IMR-90 (cell line): ENCODE measurements at regions of chr14 and their contacts with region 1.

Region 1: DNA sequence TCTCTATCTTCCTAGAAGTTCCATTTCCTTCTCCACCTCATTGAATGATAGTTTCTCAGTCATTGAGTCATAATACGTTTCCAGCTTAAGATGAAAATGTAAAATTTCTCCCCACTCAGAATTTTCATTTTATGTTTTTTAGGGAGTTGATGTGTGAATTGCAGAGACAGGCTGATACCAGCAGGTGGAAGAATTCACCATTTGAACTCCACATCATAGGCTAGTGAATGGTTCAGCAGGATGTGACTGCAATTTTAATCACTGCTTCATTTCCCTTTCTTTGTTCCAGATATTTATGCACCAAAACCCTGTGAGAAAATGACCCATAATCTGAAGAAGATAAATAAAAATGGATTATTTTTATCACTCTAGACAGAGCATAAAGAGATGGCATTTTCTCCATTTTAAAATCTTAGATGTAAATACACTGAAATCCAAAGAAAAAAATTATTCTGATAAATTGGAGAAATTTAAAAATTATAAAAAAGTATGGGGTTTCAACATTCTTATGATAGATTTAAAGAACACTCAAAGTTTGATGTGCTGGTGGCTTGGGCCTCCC is 10.6 kb upstream of the PYGL start:
- DNase-seq: peak; percentile 79
- ATAC-seq: peak; percentile 63
- H3K4me3 ChIP-seq: no peak overlapping the region
- H3K27ac ChIP-seq: peak overlapping the region; percentile 81
- H3K4me1 ChIP-seq: peaks cover 4% of the 10 kb centered on the region
- H3K27me3 ChIP-seq: no peaks in the 10 kb centered on the region
- CTCF ChIP-seq: peak; percentile 78
- POLR2A ChIP-seq: no peak
- RAD21 ChIP-seq: peak; percentile 65

Region 2: GRCh38 chr14:50920482-50921230 is 34.2 kb before region 1 on chr14:
- CTCF ChIA-PET with region 1: interaction called, 5 read pairs
- POLR2A ChIA-PET with region 1: interaction called, 20 read pairs
- dilution Hi-C with region 1: no loop called
- in situ Hi-C with region 1: no loop called
- intact Hi-C with region 1: loop called (anchors 2 kb)
- DNase-seq: peak; percentile 90
- ATAC-seq: peak; percentile 97
- H3K4me3 ChIP-seq: no peak overlapping the region
- H3K27ac ChIP-seq: peak overlapping the region; percentile 93
- H3K4me1 ChIP-seq: peaks cover 8% of the 10 kb centered on the region
- H3K27me3 ChIP-seq: no peaks in the 10 kb centered on the region
- CTCF ChIP-seq: no peak
- POLR2A ChIP-seq: no peak
- RAD21 ChIP-seq: no peak

Region 3: GRCh38 chr14:50927987-50928635 is 26.8 kb before region 1 on chr14:
- CTCF ChIA-PET with region 1: no interaction called
- POLR2A ChIA-PET with region 1: interaction called, 20 read pairs
- dilution Hi-C with region 1: no loop called
- in situ Hi-C with region 1: no loop called
- intact Hi-C with region 1: no loop called
- DNase-seq: peak; percentile 85
- ATAC-seq: peak; percentile 85
- H3K4me3 ChIP-seq: no peak overlapping the region
- H3K27ac ChIP-seq: no peak overlapping the region
- H3K4me1 ChIP-seq: peaks cover 3% of the 10 kb centered on the region
- H3K27me3 ChIP-seq: no peaks in the 10 kb centered on the region
- CTCF ChIP-seq: no peak
- POLR2A ChIP-seq: no peak
- RAD21 ChIP-seq: no peak

Region 4: DNA sequence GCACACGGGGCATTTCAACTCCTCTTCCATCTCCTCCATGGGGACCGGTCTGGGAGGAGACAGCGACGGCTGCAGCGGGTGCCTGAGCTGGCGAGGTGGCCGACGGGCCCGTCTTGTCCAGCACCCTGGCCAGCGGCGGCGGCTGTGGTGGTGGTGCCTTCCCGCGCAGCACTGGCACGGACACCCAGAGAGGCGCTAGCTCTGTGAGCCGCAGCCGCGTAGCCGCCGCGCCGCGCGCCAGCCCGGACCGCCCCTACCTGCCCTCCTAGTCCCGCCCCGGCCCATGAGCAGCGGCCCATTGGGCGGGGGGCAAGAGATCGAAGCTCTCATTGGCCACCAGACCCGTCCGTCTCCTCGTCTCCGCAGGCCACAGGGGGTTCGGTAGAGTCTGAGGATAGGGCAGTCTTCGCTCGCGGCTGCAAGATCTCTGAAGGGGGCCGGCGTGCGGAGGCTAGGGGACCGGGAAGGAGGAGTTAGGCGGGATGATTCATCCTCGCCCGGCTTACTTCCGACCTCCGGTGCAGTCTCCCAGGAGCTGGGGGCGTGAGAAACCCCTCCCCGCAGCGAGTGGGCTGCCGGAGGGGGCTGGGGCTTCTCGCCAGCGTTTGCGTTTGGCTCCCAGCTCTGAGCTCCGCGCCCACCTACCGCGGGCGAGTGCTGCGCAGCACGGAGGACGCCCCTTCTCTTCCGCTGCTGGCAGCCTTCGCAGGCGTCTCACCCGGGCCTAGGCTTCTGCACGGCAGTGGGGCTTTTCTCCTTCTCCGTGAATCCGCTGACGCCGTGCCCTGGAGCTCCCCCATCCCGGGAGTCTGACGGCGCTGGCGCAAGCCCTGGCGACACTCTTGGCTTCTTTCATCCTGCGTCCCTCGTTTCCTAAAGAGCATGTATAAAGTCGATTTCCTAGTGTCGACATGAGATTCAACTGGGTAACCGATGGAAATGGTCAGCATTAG is 140.3 kb after region 1 on chr14 and contains the start of gene TRIM9:
- CTCF ChIA-PET with region 1: no interaction called
- POLR2A ChIA-PET with region 1: interaction called, 3 read pairs
- dilution Hi-C with region 1: no loop called
- in situ Hi-C with region 1: no loop called
- intact Hi-C with region 1: loop called (anchors 5 kb)
- DNase-seq: peak; percentile 93
- ATAC-seq: peak; percentile 99
- H3K4me3 ChIP-seq: peak within 1 kb of the TSS; percentile 47
- H3K27ac ChIP-seq: no peak within 1 kb of the TSS
- H3K4me1 ChIP-seq: no peaks in the 10 kb centered on the region
- H3K27me3 ChIP-seq: peaks cover 34% of the 10 kb centered on the region
- CTCF ChIP-seq: no peak
- POLR2A ChIP-seq: no peak
- RAD21 ChIP-seq: no peak
- total RNA-seq, gene TRIM9: under 0.01 TPM in 2 replicates

Region 5: DNA sequence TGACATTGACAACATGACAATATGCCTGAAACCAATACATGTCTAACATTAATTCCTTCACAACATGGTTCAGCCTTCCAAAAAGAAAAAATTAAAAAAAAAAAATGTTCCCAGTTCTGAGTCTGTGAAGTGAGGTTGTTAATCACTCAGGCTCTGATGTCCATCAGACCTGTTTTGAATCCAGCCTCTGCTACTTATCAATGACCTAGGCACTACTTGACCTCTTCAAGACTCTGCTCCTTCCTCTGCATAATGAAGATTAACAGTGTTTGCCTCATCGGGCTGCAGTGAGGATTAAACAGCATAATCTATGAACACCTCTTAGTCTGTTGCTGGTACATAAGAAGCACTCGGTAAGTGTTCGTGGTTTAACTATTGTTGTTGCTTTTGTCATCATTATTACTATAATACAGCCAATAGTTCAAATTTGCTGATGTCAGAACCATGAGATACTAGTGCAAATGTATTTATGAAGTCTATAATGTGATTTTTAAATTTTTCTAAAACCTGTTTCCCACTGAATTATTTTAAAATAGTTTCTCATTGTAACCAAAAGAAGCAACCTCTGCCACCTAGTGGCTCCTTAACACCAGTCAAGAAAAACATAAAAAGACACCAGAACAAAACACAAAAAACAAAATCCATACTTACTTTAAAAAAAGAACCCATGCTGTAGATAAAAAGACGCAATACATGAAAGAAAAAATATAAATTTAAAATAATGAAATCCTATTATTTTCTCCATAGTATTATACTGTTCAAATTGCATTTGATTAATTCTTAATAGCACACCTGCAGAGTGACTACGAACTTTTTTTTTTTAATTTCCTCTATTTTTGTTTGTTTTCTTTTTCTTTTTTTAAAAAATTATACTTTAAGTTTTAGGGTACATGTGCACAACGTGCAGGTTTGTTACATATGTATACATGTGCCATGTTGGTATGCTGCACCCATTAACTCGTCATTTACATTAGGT is 264.9 kb after region 1 on chr14:
- CTCF ChIA-PET with region 1: no interaction called
- POLR2A ChIA-PET with region 1: no interaction called
- dilution Hi-C with region 1: no loop called
- in situ Hi-C with region 1: no loop called
- intact Hi-C with region 1: loop called (anchors 1 kb)
- DNase-seq: peak; percentile 54
- ATAC-seq: peak; percentile 56; the same call in 1 of the 2 replicates
- H3K4me3 ChIP-seq: no peak overlapping the region
- H3K27ac ChIP-seq: no peak overlapping the region
- H3K4me1 ChIP-seq: no peaks in the 10 kb centered on the region
- H3K27me3 ChIP-seq: no peaks in the 10 kb centered on the region; the same call in 1 of the 2 replicates
- CTCF ChIP-seq: peak; percentile 68
- POLR2A ChIP-seq: no peak
- RAD21 ChIP-seq: peak; percentile 55

Region 6: GRCh38 chr14:52220924-52221811 is 1266.3 kb after region 1 on chr14:
- CTCF ChIA-PET with region 1: no interaction called
- POLR2A ChIA-PET with region 1: interaction called, 11 read pairs
- dilution Hi-C with region 1: no loop called
- in situ Hi-C with region 1: no loop called
- intact Hi-C with region 1: no loop called
- DNase-seq: no peak
- ATAC-seq: no peak
- H3K4me3 ChIP-seq: no peak overlapping the region
- H3K27ac ChIP-seq: no peak overlapping the region
- H3K4me1 ChIP-seq: peaks cover 3% of the 10 kb centered on the region; the same call in 1 of the 2 replicates
- H3K27me3 ChIP-seq: peaks cover 6% of the 10 kb centered on the region
- CTCF ChIP-seq: no peak
- POLR2A ChIP-seq: no peak
- RAD21 ChIP-seq: no peak